HAP-1 (cell line): ENCODE measurements at regions of chr11 and their contacts with region 1.

Region 1: GRCh38 chr11:65506770-65507505 is 8.1 kb downstream of the MALAT1 start:
- DNase-seq: peak; percentile 80 to 87
- H3K4me3 ChIP-seq: peak overlapping the region; percentile 60
- H3K4me1 ChIP-seq: peaks cover 16% of the 10 kb centered on the region
- H3K27me3 ChIP-seq: no peaks in the 10 kb centered on the region

Region 2: GRCh38 chr11:64553551-64554201 is 953.3 kb before region 1 on chr11:
- in situ Hi-C with region 1: no loop called
- DNase-seq: peak; percentile 59 to 83
- H3K4me3 ChIP-seq: no peak overlapping the region
- H3K4me1 ChIP-seq: peaks cover 11% of the 10 kb centered on the region
- H3K27me3 ChIP-seq: no peaks in the 10 kb centered on the region; the same call in none of the 2 replicates

Region 3: DNA sequence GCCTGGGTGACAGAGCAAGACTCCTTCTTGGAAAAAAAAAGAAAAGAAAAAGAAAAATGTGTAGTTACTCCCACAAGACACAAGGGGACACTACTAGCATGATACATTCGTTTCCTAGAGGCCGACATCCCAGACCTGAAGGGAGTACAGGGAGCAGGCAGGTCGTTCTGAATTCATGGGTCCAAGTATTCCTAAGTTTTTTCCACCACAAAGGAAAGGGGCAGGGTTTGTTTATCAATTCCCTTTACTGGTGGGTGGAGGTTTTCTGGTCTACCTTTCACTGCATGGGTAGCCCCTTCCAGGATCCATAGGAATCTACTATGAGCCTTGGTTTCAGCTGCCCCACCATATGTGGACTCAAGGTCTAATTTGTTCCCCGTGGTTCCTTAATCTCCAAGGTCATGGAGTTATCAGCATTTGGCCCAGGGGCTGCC is 140.6 kb before region 1 on chr11:
- in situ Hi-C with region 1: loop called (anchors 5 kb)
- DNase-seq: peak; percentile 69 to 88
- H3K4me3 ChIP-seq: no peak overlapping the region
- H3K4me1 ChIP-seq: peaks cover 11% of the 10 kb centered on the region
- H3K27me3 ChIP-seq: no peaks in the 10 kb centered on the region

Region 4: DNA sequence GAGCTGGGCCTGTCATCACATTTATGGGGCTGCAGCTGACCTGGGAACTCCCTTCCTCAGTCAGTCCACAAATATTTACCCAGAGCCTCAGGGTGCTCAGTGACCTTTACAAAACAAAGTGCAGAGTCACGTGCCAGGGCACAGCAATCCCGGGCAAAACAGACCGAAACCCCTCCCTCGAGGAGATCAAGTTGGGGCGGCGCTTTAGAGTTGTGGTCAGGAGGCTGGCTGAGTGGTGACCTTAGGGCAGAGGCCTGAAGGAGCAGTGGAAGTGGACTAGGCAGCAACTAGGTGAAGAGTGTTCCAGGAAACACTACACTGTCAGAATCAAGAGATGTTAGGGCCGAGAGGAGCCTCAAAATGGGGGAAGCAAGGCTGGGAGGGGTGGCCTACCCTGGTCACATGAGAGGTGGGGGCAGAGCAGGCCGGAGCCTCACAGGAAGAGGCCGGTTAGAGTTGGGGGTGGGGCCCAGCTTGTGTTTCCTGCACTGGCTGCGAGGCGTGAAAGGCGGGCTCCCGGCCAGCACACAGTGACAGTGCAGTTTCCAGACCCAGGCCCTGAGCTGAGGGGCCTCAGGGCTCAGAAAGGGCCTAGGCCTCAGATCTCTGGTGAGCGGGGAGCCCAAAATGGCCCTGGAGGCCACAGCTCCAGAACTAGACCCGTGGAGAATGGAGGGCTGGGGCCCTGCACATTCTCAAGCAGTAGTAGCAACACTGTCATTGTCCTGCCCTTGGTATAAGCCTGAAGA is 88.1 kb before region 1 on chr11:
- in situ Hi-C with region 1: loop called (anchors 5 kb)
- DNase-seq: peak; percentile 92 to 97
- H3K4me3 ChIP-seq: peak overlapping the region; percentile 12
- H3K4me1 ChIP-seq: peaks cover 50% of the 10 kb centered on the region
- H3K27me3 ChIP-seq: no peaks in the 10 kb centered on the region